ENCODE measurements at regions of chr5 and their contacts with region 1.

Region 1: GRCh38 chr5:127564002-127564769 is 46.7 kb downstream of the PRRC1 start:
- DNase-seq: peak; percentile 69
- H3K4me3 Mint-ChIP-seq: no peak overlapping the region
- H3K27ac Mint-ChIP-seq: no peak overlapping the region
- H3K4me1 Mint-ChIP-seq: peaks cover 7% of the 10 kb centered on the region
- H3K27me3 Mint-ChIP-seq: peaks cover 12% of the 10 kb centered on the region

Region 2: DNA sequence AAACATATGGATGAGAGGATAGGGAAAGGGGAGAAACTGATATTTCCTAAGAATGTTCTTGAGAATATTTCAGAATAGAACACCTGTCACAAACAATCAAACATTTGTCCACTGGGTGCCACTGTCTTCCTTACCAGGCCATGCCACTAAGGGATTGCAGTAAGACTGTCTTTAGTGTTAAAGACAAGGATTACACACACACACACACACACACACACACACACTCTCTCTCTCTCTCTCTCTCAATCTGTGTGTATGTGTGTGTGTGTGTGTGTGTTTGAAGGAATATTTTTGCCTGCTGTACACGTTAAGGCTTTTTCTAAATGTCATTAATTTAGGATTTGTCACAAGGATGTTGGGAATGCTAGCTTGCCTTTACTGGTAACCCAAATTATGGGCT is 193.4 kb after region 1 on chr5:
- CTCF ChIA-PET with region 1: no interaction called
- intact Hi-C with region 1: loop called (anchors 1 kb)
- DNase-seq: peak; percentile 42
- H3K4me3 Mint-ChIP-seq: no peak overlapping the region
- H3K27ac Mint-ChIP-seq: no peak overlapping the region
- H3K4me1 Mint-ChIP-seq: no peaks in the 10 kb centered on the region
- H3K27me3 Mint-ChIP-seq: peaks cover 2% of the 10 kb centered on the region

Region 3: GRCh38 chr5:127875235-127876021 is 311.2 kb after region 1 on chr5:
- CTCF ChIA-PET with region 1: no interaction called
- intact Hi-C with region 1: loop called (anchors 5 kb)
- DNase-seq: peak; percentile 59
- H3K4me3 Mint-ChIP-seq: no peak overlapping the region
- H3K27ac Mint-ChIP-seq: no peak overlapping the region
- H3K4me1 Mint-ChIP-seq: no peaks in the 10 kb centered on the region
- H3K27me3 Mint-ChIP-seq: peaks cover 3% of the 10 kb centered on the region

Region 4: DNA sequence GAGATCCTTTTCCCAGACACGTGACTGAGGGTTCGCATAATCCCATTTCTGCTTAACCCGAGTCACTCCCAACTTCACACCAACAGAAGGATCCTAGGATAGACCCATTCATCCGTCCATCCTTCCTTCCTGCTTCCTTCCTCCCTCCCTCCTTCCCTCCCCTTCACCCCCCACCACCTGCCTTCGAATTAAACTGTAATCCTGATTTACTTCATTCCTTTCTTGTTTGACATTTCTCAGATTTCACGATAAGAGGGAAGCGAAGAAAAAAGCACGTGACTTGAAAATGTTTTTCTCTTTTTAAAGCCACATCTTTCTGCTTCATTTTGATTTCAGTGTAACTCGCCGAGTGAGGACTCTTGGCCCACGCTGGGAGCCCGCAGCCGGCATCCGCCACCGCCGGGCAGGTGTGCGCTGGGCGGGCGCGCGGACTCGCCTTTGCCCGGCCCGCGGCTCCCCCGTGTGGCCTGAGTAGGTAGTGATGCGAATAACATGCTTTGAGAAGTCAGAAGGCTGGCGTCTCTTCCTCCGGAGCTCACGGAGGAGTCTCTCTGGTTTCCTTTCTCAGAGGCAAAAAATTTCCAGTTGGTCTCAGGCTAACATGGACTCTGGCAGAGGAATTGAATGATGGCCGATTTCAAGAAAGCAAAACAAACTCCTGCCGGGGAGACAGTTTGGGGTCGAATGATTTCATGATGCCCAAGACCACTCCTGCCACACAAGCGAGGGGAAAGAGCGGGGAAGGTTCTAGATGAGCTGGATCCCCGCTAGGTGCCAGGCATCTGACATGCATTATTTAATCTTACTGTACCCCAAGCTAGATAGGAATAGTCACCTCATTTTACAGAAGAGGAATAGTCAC is 637.1 kb after region 1 on chr5:
- CTCF ChIA-PET with region 1: interaction called, 9 read pairs
- intact Hi-C with region 1: loop called (anchors 1 kb)
- DNase-seq: peak; percentile 90
- H3K4me3 Mint-ChIP-seq: no peak overlapping the region
- H3K27ac Mint-ChIP-seq: no peak overlapping the region
- H3K4me1 Mint-ChIP-seq: peaks cover 32% of the 10 kb centered on the region
- H3K27me3 Mint-ChIP-seq: no peaks in the 10 kb centered on the region

Region 5: DNA sequence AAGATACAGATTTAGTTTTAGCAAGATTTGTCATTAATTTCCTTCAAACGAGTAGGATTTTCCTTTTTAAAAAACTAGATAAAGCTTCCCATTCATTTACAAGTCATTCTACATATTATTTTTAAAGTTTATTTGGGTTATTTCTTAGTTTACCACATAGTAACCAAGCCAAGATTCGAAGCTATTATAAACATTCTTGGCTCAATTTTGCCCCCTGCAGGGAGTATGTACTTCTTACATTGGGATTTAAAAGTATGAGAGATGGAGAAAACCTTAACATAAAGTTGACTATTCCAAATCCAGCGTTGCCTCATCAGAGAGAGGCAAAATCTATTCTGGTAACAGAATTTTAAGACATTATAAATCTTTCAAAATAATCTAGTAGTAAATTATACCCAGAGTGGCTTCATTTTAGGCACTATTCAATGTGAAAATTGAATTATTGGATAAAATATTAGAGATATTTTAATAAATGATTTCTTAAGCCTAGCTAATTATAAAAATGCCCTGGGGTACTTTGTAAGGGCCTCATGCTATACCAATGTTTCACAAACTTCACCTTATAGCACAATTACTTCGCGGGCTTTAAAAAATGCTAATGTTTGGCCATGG is 934.8 kb after region 1 on chr5:
- CTCF ChIA-PET with region 1: interaction called, 3 read pairs
- intact Hi-C with region 1: loop called (anchors 1 kb)
- DNase-seq: no peak
- H3K4me3 Mint-ChIP-seq: no peak overlapping the region
- H3K27ac Mint-ChIP-seq: no peak overlapping the region
- H3K4me1 Mint-ChIP-seq: no peaks in the 10 kb centered on the region
- H3K27me3 Mint-ChIP-seq: no peaks in the 10 kb centered on the region

Region 6: DNA sequence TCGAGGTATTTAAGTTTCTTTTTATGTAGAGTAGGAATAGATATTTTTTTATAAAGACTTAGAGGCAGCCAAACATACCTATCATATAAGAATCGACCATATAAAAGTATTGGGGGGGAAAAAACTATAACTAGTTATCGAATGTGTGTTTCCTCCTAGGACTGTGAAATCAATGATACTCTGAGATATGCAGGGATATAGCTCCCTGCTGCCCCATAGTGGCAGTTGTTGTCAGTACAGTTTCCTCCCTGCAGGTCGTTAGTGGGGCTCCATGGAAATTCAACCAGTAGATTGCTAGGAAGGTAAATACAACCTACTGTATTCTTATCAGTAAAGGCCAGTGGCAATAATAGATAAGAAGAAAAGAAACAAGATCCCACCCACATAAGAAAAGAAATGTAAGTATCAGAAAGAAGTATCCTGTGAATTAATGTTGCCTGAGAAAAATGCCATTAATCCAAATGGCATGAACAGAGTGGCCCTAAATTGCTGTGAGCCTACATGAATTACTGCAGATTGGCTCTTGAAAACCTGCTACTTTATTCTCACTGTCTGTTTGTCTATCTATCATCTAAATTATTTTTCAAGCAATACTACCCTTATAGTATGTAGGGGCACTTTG is 1110.8 kb after region 1 on chr5:
- CTCF ChIA-PET with region 1: no interaction called
- intact Hi-C with region 1: loop called (anchors 2 kb)
- DNase-seq: peak; percentile 62
- H3K4me3 Mint-ChIP-seq: no peak overlapping the region
- H3K27ac Mint-ChIP-seq: no peak overlapping the region
- H3K4me1 Mint-ChIP-seq: no peaks in the 10 kb centered on the region
- H3K27me3 Mint-ChIP-seq: peaks cover 13% of the 10 kb centered on the region

Region 7: GRCh38 chr5:128844354-128844923 is 1280.3 kb after region 1 on chr5:
- CTCF ChIA-PET with region 1: no interaction called
- intact Hi-C with region 1: loop called (anchors 5 kb)
- DNase-seq: no peak
- H3K4me3 Mint-ChIP-seq: no peak overlapping the region
- H3K27ac Mint-ChIP-seq: no peak overlapping the region
- H3K4me1 Mint-ChIP-seq: no peaks in the 10 kb centered on the region
- H3K27me3 Mint-ChIP-seq: no peaks in the 10 kb centered on the region